H1 (cell line): ENCODE measurements at regions of chr1 and their contacts with region 1.

Region 1: GRCh38 chr1:87117761-87118368 is 203.4 kb downstream of the HS2ST1 start:
- DNase-seq: no peak
- H3K4me3 ChIP-seq: no peak overlapping the region
- H3K27ac ChIP-seq: no peak overlapping the region
- H3K4me1 ChIP-seq: peaks cover 0 to 7% (median 4%) of the 10 kb centered on the region in 4 experiments; a peak in 5 of 7 replicates
- H3K27me3 ChIP-seq: no peaks in the 10 kb centered on the region
- CTCF ChIP-seq: no peak
- EP300 ChIP-seq: no peak
- POLR2A ChIP-seq: no peak
- RAD21 ChIP-seq: no peak

Region 2: DNA sequence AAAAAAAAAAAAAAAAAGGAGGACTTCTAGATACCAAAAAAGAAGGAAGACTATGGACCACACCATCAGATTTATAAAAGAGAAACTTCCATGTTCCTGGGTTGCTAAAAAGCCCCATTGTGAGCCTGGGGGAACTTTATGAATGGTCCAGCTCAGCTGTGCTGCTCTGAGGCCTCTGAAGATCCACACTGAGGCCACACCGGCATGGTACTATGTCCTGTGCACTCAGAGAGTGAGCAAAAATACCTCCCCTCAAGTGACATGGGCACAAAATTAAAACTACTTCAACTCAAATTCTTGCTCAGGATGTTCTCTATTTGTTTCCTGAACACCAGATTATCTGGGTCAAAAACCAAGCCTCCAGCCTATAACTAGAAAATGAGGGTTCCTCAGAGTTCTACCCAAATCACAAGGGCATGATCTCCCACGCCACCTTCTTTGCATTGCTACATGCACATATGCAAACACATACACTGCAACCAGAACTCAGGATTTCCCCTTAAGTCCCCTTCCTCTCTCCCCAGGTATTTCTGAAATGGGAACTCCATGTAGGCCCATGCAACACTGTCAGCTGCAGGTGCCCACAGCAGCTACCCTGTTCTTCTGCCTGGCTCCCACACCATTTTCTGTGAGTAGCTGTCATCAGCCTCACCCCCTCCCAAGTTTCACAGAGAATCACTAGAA is 319.1 kb before region 1 on chr1:
- CTCF ChIA-PET with region 1: no interaction called
- POLR2A ChIA-PET with region 1: no interaction called
- DNase-seq: peak in 1 of 2 experiments; percentile 26
- H3K4me3 ChIP-seq: no peak overlapping the region
- H3K27ac ChIP-seq: no peak overlapping the region
- H3K4me1 ChIP-seq: no peaks in the 10 kb centered on the region
- H3K27me3 ChIP-seq: no peaks in the 10 kb centered on the region
- CTCF ChIP-seq: no peak
- EP300 ChIP-seq: no peak
- POLR2A ChIP-seq: no peak
- RAD21 ChIP-seq: no peak

Region 3: DNA sequence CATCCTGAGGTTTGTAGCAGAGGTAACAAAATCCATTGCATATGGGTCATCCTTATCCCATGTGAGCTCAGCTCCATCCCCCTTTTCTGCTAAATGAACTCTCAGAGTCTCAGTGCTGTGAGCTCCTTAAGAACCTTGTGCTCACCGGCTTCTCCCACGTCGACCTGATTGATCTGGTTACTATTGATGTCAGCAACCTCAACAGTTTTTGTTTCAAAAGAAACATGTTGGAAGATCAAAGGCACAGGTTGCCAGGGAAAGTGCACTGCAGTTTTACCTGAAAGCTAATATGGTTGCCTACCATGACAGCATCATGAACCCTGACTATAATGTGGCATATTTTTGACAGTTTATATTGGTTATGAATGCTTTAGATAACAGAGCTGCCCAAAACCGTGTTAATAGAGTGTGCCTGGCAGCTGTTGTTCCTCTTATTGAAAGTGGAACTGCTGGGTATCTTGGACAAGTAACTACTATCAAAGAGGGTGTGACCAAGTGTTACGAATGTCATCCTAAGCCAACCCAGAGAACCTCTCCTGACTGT is 72.0 kb before region 1 on chr1:
- CTCF ChIA-PET with region 1: no interaction called
- POLR2A ChIA-PET with region 1: no interaction called
- DNase-seq: no peak
- H3K4me3 ChIP-seq: no peak overlapping the region
- H3K27ac ChIP-seq: no peak overlapping the region
- H3K4me1 ChIP-seq: no peaks in the 10 kb centered on the region
- H3K27me3 ChIP-seq: no peaks in the 10 kb centered on the region
- CTCF ChIP-seq: no peak
- EP300 ChIP-seq: no peak
- POLR2A ChIP-seq: no peak
- RAD21 ChIP-seq: no peak

Region 4: GRCh38 chr1:87093286-87093685 is 24.6 kb before region 1 on chr1:
- CTCF ChIA-PET with region 1: interaction called, 10 read pairs
- POLR2A ChIA-PET with region 1: no interaction called
- DNase-seq: no peak
- H3K4me3 ChIP-seq: no peak overlapping the region
- H3K27ac ChIP-seq: no peak overlapping the region
- H3K4me1 ChIP-seq: no peaks in the 10 kb centered on the region
- H3K27me3 ChIP-seq: no peaks in the 10 kb centered on the region
- CTCF ChIP-seq: no peak
- EP300 ChIP-seq: no peak
- POLR2A ChIP-seq: no peak
- RAD21 ChIP-seq: no peak

Region 5: DNA sequence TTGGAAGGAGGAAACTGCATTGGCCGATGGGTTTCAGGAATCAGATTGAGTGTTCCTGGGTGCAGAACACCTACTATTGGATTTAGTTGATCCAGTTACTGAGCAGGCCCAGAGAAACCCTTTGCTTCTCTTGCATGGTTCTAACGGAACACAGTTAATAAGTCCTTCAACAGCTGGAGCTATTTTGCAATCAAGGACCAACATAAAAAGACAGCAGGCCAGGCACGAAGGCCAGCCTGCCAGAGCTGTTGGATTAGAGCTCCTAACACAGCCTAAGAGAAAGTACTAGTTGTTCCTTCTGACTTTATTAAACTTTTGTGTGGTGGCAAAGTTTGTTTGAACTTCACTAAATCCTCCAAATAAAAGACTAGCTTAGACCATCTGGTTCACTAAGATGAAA is 62.8 kb after region 1 on chr1:
- CTCF ChIA-PET with region 1: no interaction called
- POLR2A ChIA-PET with region 1: no interaction called
- DNase-seq: no peak
- H3K4me3 ChIP-seq: no peak overlapping the region
- H3K27ac ChIP-seq: no peak overlapping the region
- H3K4me1 ChIP-seq: no peaks in the 10 kb centered on the region
- H3K27me3 ChIP-seq: no peaks in the 10 kb centered on the region
- CTCF ChIP-seq: no peak
- EP300 ChIP-seq: no peak
- POLR2A ChIP-seq: no peak
- RAD21 ChIP-seq: no peak